Left cardiac atrium (tissue), 4 donors: ENCODE measurements at regions of chr16 and their contacts with region 1.

Region 1: DNA sequence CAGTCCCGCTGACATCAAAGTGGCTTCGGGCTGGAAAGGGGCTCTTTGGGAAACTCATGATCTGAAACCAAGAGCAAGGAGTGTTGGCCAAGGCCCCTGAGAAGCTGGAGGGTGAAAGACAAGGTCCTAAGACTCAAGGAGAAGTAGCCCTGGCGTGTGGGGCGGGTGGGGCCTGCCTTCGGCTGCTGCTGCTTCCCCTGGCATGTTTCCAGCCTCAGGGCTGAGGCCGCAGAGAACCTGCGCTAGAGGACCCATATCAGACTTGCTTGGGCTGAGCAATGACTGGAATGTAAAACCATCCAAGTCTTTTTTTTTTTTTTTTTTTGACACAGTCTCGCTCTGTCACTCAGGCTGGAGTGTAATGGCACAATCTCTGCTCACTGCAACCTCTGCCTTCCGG is 67.5 kb upstream of the GCSH start:
- DNase-seq: no peak
- ATAC-seq: no peak

Region 2: DNA sequence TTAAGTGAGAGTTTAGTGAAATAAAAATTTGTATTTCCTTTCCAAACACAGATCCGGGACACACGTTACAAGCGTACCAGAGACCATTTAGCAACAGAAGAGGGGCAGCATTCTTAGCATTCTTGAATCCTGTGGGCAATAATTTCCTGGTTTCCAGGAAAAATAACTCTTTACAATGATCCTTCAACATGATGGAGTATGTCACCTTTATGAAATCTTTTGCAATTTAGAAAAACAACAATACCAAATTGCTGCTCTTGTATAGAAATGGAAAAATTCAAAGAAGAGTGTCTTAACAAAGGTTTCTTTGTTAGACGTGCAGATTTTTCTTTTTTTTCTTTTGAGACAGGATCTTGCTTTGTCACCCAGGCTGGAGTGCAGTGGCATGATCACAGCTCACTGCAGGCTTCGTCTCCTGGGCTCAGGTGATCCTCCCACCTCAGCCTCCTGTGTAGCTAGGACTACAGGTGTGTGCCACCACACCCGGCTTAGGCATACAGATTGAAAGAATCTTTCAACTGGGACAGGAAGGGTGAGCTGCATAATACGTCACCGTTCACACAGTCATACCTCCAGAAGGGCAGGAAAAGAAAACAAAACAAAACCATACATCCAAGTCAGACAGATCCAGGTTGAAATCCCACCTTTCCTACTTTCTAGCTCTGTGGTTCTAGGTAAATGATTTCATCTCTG is 56.7 kb before region 1 on chr16:
- intact Hi-C with region 1: loop called in 1 of 2 experiments (anchors 10 kb)
- DNase-seq: no peak
- ATAC-seq: no peak

Region 3: DNA sequence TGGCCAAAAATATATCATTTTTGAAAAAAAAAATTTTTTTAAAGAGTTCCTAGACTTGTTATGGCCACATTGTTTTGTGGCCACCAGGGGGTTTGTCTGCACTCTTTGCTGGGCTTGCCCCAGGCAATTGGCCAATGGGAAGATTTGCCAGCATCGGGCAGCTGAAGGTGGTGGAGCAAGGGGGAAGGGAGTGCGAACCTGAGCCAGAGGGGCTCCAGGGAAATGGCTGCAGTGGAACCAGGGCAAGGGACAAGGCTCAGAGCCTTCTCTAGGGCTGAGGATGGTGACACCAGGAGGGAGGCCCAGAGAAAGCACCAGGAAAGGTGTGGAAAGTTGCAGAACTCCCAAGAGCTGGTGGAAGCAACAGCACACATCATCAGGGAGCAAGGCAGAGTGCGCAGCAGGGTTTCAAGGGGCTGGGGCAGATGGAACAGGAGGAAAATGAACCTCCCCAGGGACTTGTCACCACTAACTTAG is 265.4 kb after region 1 on chr16:
- intact Hi-C with region 1: no loop called
- DNase-seq: peak; percentile 63
- ATAC-seq: peak; percentile 48 to 54